ENCODE measurements at regions of chr11 and their contacts with region 1.

Region 1: GRCh38 chr11:9460322-9461067 is at the start of gene ZNF143:
- DNase-seq: peak; percentile 91

Region 2: GRCh38 chr11:9231848-9232177 is 228.7 kb before region 1 on chr11:
- CTCF ChIA-PET with region 1: no interaction called
- POLR2A ChIA-PET with region 1: no interaction called
- DNase-seq: no peak

Region 3: GRCh38 chr11:9247863-9248262 is 212.6 kb before region 1 on chr11:
- CTCF ChIA-PET with region 1: no interaction called
- POLR2A ChIA-PET with region 1: no interaction called
- DNase-seq: no peak

Region 4: GRCh38 chr11:9280655-9281301 is 179.7 kb before region 1 on chr11:
- CTCF ChIA-PET with region 1: no interaction called
- POLR2A ChIA-PET with region 1: no interaction called
- DNase-seq: no peak

Region 5: DNA sequence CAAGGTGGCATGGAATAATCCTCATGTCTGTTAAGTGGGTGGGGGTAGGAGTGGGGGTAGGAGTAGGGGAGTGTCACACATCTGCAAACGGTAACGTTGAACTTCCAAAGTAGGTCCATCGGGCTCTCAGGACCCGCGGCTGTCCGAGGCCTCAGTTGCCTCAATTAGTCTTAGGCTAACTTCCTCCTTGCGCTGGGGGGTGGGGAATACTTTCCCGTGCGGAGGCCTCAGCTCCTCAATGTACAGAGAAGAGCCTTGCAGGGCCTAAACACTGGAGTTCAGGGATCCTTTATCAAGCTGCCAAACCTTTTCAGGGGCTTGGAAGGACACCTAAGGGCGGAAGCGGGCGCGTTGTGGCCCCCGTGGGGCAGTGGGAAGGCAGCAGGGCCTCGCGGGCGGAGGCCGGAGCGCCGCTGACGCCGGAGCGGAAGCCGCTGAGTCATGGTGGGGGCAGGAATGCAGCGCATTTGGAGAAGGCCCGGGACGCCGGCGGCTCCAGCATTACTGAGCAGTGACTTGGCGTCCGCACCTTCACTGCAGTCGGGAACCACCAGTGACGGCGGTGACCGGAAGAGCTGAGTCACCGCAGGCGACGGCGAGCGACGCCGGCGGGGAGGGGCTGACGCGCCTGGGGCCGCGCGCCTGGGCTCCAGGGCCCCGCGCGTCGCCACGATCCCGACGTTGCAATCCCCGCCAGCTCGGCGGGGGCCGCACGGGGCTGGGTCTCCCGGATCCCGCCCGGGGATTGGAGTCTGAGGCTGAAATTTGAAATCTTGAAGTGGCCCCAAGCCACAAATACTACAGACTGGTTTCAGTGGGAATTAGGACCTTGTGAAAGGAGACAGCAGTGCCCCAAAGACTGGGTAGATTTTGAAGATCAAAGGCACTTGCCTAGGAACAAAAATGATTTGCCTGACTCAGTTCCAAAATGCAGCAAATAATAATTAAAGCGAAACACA is 96.3 kb before region 1 on chr11:
- CTCF ChIA-PET with region 1: no interaction called
- POLR2A ChIA-PET with region 1: interaction called, 11 read pairs
- DNase-seq: peak; percentile 85

Region 6: DNA sequence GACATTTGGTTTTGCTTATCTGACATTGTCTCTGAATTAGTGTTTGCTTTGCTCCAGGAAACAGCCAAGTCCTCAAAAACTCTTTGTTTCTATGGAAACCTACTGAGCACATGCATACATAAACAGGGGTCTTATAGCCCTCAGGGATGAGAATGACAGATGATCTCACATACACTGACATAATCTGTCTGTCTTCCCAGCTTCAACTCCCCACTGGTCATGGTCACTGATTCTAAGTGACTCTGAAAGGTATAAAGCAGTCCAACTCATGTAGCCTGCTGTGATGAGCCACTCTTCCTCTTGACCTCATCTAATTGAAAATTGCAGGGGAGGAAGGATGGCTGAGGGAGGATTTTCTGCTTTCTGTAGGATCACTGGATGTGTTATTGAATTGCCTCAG is 12.9 kb after region 1 on chr11:
- CTCF ChIA-PET with region 1: interaction called, 4 read pairs
- POLR2A ChIA-PET with region 1: interaction called, 44 read pairs
- DNase-seq: peak; percentile 23

Region 7: DNA sequence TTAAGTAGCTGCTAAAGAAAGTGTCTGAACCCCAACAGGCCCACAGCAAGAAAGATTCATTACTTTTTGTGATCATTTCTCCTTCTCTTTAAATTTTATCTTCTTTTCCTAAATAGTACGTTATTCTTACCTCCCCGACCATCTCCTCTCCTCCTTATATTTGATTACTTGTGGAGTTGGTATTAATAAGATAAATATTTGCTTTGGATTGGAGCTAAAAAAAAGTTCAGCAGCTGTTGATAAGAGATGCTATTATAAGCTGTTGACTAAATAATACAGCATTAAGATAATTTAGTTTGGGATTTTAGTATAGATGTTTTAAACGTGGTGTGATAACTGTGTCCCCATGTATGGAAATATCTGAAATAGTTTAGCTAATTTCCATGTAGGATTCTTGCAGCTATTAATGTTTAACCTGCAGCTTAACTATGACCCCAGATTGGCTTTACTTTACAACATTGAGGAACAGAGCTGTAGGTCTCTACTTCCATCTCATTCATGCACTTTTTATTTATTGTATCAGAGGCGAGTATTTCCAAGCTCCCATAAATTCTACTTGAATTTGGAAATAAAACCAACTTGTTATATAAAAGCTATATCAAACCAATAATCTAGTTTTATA is 38.1 kb after region 1 on chr11:
- CTCF ChIA-PET with region 1: no interaction called
- POLR2A ChIA-PET with region 1: interaction called, 20 read pairs
- DNase-seq: no peak

Region 8: DNA sequence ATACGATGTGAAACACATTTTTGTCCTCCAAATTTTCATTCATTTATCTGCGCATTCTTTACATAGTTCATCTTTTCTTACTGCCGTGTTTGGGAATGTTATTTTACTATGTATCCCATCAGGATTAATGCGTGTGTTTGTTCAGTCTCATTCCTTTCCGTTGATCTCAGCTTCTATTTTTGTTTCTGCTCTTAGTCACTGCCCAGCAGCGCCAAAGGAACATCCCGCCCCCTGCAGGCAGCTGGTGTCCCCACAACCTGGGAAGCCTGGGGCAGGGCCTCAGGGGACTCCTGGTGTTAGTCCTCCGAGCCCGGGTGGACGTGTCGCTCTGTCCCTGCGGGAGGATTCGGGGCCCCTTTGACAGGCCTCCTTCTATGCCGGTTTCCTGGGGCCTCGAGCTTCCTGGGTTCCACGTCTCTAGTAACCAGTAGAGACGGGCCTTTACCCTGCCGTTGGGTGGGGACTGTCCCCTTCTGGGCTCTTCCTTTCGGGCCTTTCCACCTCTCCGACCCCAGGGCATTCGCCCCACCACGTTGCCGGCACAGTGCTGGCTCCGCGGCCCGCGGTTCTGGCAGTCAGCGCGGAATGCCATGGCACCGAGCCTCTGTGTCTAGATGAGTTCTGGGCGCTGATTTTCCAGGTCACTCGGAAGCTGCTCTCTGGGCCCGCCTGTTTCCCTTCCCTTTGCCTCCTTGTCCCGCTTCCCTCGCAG is 152.8 kb after region 1 on chr11:
- CTCF ChIA-PET with region 1: no interaction called
- POLR2A ChIA-PET with region 1: interaction called, 10 read pairs
- DNase-seq: peak; percentile 94

Measured in HEK293T (cell line).